Activated B cell treated with CpG ODN at 0.5 μM for 24 hours (primary cell): ENCODE measurements at regions of chr14 and their contacts with region 1.

Region 1: DNA sequence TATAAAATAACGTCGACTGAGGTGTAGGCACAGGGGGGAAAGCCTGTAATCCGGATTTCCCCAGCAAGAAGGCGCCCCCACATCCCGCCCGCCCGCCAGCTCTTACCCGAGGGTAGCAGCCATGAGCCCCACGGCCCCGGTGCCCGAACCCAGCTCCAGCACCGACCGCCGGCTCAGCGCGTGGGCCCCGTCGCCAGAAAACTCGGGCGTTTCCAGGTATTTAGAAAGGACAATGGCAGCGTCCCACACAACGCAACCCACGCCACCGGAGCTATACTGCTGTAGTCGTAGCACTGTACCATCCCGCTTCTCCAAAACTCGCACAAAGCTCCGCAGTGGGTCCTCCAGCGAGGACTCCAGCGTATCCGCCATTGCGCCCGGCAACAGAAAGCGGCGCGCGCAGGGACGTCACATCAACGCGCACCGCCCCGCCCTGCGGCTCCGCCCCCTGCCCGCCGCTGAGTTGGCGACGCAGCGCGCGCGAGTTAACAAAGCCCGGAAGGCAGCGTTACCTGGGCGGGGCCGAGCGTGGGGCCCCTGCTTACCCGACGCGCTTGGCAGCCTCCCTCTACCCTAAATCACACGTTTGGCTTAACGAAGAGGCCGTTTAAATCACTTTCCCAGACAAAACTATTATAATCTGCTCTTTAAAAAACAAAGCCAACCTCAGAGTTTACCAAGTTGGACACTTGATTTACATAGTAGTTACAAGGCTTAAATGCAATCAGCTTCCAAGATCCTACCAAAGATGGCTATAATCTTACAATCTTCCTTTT is at the start of gene VCPKMT:
- DNase-seq: peak; percentile 97
- ATAC-seq: peak; percentile 96
- H3K4me3 Mint-ChIP-seq: peak within 1 kb of the TSS; percentile 95
- H3K27ac Mint-ChIP-seq: peak within 1 kb of the TSS; percentile 97
- H3K4me1 Mint-ChIP-seq: peaks cover 51% of the 10 kb centered on the region
- H3K27me3 Mint-ChIP-seq: no peaks in the 10 kb centered on the region
- CTCF ChIP-seq: no peak
- total RNA-seq, gene VCPKMT: 19.9 and 20.8 TPM in 2 replicates

Region 2: GRCh38 chr14:49461529-49462401 is 654.6 kb before region 1 on chr14:
- CTCF ChIA-PET with region 1: no interaction called
- POLR2A ChIA-PET with region 1: no interaction called
- intact Hi-C with region 1: loop called (anchors 10 kb)
- DNase-seq: no peak
- ATAC-seq: peak; percentile 81
- H3K4me3 Mint-ChIP-seq: no peak overlapping the region
- H3K27ac Mint-ChIP-seq: no peak overlapping the region
- H3K4me1 Mint-ChIP-seq: no peaks in the 10 kb centered on the region
- H3K27me3 Mint-ChIP-seq: peaks cover 5% of the 10 kb centered on the region
- CTCF ChIP-seq: peak; percentile 62

Region 3: GRCh38 chr14:49620182-49621113 is 495.9 kb before region 1 on chr14 and contains the starts of genes MGAT2 and RPL36AL:
- CTCF ChIA-PET with region 1: no interaction called
- POLR2A ChIA-PET with region 1: interaction called, 5 read pairs
- intact Hi-C with region 1: loop called (anchors 1 kb)
- DNase-seq: peak; percentile 90
- ATAC-seq: peak; percentile 90
- H3K4me3 Mint-ChIP-seq: peak within 1 kb of the TSS; percentile 97
- H3K27ac Mint-ChIP-seq: peak within 1 kb of the TSS; percentile 97
- H3K4me1 Mint-ChIP-seq: peaks cover 61% of the 10 kb centered on the region
- H3K27me3 Mint-ChIP-seq: no peaks in the 10 kb centered on the region
- CTCF ChIP-seq: no peak
- total RNA-seq, gene MGAT2: 39.7 and 40.5 TPM in 2 replicates
- total RNA-seq, gene RPL36AL: 150 and 166 TPM in 2 replicates

Region 4: GRCh38 chr14:49767562-49768300 is 348.6 kb before region 1 on chr14 and contains the start of gene KLHDC2:
- CTCF ChIA-PET with region 1: no interaction called
- POLR2A ChIA-PET with region 1: interaction called, 12 read pairs
- intact Hi-C with region 1: no loop called
- DNase-seq: peak; percentile 86
- ATAC-seq: peak; percentile 88
- H3K4me3 Mint-ChIP-seq: peak within 1 kb of the TSS; percentile 97
- H3K27ac Mint-ChIP-seq: peak within 1 kb of the TSS; percentile 99
- H3K4me1 Mint-ChIP-seq: peaks cover 33% of the 10 kb centered on the region
- H3K27me3 Mint-ChIP-seq: no peaks in the 10 kb centered on the region
- CTCF ChIP-seq: no peak
- total RNA-seq, gene KLHDC2: 27.0 and 31.2 TPM in 2 replicates

Region 5: DNA sequence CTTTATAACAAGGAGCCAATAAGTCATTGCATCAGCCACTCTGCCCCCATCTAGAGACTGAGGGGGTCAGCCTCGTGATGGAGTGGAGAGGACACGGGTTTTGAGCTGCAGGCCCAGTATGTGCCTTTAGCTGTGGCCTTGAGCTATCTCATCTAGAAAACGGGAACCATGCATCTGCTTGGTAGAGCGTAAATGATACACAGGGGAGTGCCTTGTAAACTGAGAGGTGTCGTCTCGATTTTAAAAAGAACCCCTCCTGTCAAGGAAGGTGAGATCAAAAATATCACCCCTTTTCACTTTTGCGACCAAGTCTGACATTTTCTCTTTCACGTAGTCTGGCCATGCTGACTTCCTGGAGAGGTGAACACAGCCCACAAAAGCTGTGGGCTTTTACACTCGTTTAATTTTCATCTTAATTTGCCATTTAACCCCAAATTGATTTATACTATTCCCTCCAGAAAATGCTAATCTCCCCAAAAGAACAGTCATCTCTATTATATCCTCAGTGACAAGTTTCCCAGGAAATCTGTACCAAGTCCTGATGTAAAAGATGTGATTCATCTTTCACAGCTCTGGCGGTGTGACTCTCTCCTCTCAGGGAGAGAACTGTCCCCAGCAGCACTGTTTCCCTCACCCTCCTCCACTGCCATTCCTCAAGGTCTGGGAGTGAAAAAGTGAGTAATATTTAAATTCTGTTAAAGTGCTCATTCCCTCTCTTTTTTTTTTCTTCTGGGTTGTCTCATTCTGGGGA is 30.6 kb before region 1 on chr14:
- CTCF ChIA-PET with region 1: interaction called, 3 read pairs
- POLR2A ChIA-PET with region 1: interaction called, 22 read pairs
- intact Hi-C with region 1: no loop called
- DNase-seq: peak; percentile 44
- ATAC-seq: peak; percentile 75
- H3K4me3 Mint-ChIP-seq: peak overlapping the region; percentile 68
- H3K27ac Mint-ChIP-seq: peak overlapping the region; percentile 97
- H3K4me1 Mint-ChIP-seq: peaks cover 92% of the 10 kb centered on the region
- H3K27me3 Mint-ChIP-seq: no peaks in the 10 kb centered on the region
- CTCF ChIP-seq: no peak

Region 6: DNA sequence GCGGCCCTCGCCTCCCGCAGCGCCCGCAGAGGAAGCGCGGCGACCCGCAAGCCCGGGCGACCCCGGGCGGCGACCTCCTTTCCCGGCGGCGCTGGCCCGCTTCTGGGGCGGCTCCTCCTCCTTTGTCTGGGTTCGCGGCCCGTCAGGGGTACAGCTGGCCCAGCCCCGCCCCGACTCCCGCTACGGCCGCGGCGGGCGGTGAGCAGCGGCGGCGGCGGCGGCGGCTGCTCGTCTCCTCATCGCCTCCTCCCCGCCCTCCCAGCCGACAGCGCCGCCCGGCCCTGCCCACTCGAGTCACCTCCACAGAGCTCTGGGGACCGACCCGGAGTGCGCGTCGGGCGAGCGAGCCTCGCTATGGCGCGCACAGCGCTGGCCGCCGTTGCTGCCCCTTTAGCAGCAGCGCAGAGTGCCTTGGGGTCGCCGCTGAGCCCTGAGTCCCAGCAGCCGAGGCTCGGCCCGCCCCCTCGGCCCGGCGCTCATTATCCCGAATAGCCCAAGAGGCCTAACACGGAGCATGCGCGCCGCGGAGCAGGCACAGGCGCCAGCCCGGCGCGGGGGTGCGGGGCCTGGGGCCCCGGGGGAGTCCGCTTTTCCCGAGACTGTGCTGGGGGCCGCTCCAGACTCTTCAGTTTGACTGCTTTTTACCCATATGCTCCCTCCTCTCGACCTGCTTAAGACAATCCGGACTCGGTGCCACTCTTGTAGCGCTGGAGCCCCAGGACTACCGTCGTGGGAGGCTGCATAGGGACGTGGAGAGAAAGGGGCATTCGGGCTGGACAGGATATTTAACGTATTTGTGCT is 115.3 kb after region 1 on chr14 and contains the start of gene SOS2:
- CTCF ChIA-PET with region 1: no interaction called
- POLR2A ChIA-PET with region 1: interaction called, 5 read pairs
- intact Hi-C with region 1: loop called (anchors 2 kb)
- DNase-seq: peak; percentile 87
- ATAC-seq: peak; percentile 87
- H3K4me3 Mint-ChIP-seq: peak within 1 kb of the TSS; percentile 93
- H3K27ac Mint-ChIP-seq: peak within 1 kb of the TSS; percentile 92
- H3K4me1 Mint-ChIP-seq: peaks cover 35% of the 10 kb centered on the region
- H3K27me3 Mint-ChIP-seq: no peaks in the 10 kb centered on the region
- CTCF ChIP-seq: no peak
- total RNA-seq, gene SOS2: 29.1 and 32.0 TPM in 2 replicates